Naive thymus-derived CD4-positive, alpha-beta T cell (primary cell): ENCODE measurements at regions of chr7 and their contacts with region 1.

Region 1: DNA sequence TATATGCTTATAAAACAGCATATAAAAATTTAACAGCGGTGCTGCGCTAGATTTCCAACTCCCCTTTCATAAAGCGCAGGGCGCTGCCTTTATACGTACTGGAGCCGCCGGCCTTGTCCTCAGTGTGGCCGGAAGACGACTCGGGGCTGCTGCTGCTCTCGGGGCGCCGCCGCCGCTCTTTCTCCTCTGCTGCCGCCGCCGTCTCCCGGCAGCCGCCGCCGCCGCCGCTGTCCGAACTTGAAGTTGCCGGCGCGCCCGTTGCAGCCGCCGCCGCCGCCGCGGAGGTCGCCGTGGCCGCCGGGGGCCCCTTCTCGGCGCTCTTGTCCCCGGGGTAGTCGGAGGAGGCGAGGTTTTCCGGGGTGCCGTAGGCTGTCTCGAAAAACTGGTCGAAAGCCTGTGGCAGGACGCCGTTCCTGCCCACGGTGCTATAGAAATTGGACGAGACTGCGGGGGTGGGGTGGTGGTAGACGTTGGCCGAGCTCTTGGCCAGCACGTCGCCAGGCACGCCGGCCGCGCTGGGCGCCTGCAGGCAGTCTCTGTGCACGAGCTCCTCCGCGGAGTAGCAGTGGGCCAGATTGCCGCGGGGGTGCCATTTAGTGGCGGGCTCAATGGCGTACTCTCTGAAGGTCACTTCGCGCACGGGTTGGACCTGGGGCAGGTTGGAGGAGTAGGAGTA is 557 bp downstream of the HOXA11 start:
- DNase-seq: peak in 2 of 9 donors; percentile 36 to 38
- ATAC-seq: peak; percentile 22
- H3K4me3 ChIP-seq: peak overlapping the region; percentile 39
- H3K4me3 Mint-ChIP-seq: peak overlapping the region; percentile 69 to 87 (median 79)
- H3K27ac ChIP-seq: no peak overlapping the region
- H3K27ac Mint-ChIP-seq: peak overlapping the region in 7 of 9 donors; percentile 43 to 84 (median 73)
- H3K4me1 ChIP-seq: peaks cover 40 to 52% of the 10 kb centered on the region in 2 donors
- H3K4me1 Mint-ChIP-seq: peaks cover 29 to 62% (median 51%) of the 10 kb centered on the region in 7 donors
- H3K27me3 ChIP-seq: peaks cover 47 to 89% of the 10 kb centered on the region in 2 donors
- H3K27me3 Mint-ChIP-seq: peaks cover 78 to 92% (median 81%) of the 10 kb centered on the region in 5 donors

Region 2: GRCh38 chr7:27139334-27140125 is 44.9 kb before region 1 on chr7:
- CTCF ChIA-PET with region 1: no interaction called
- POLR2A ChIA-PET with region 1: no interaction called
- intact Hi-C with region 1: no loop called
- DNase-seq: no peak
- ATAC-seq: no peak
- H3K4me3 ChIP-seq: no peak overlapping the region
- H3K4me3 Mint-ChIP-seq: no peak overlapping the region
- H3K27ac ChIP-seq: no peak overlapping the region
- H3K27ac Mint-ChIP-seq: no peak overlapping the region
- H3K4me1 ChIP-seq: no peaks in the 10 kb centered on the region
- H3K4me1 Mint-ChIP-seq: peaks cover 0 to 11% (median 5%) of the 10 kb centered on the region in 7 donors
- H3K27me3 ChIP-seq: peaks cover 0 to 4% of the 10 kb centered on the region in 2 donors
- H3K27me3 Mint-ChIP-seq: peaks cover 40 to 64% (median 59%) of the 10 kb centered on the region in 5 donors

Region 3: DNA sequence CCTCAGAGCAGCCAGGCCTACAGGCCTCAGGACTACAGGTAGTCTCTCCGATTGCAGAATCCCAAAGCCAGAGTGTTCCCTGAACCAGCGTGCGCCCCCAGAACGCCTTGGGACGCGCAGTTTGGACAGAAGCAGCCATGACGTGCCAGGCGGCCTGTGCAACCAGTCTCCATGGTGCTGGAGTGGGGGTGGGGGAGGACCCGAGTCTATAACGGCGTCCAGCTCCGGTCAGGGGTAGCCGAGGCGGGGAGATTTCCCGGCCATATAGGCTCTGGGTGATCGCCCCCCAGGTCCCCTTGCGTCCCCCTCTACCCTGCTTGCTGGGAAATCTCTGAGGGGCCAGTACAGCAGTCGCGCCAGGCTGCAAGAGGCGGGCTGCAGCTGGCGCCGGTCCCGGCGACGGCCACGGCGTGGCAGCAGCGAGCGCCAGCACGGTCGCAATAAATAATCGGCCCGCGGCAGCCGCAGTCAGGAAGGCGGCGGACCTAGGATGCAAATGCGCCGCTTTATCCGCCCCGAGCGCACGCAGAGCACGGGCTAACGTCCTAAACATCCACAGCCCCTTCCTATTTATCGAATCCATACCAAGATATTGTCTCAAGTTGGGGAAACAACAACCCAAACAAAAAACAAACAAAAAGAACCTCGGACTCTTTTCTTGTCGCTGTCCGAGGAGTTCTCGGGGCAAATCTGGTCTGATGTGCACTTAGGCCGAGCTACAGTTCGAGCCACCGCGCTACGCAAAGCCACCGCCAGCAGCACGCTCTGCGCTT is 33.7 kb before region 1 on chr7:
- CTCF ChIA-PET with region 1: interaction called, 3 read pairs
- POLR2A ChIA-PET with region 1: no interaction called
- intact Hi-C with region 1: loop called (anchors 5 kb)
- DNase-seq: peak in 8 of 9 donors; percentile 34 to 74 (median 62)
- ATAC-seq: peak; percentile 89
- H3K4me3 ChIP-seq: peak overlapping the region; percentile 75
- H3K4me3 Mint-ChIP-seq: peak overlapping the region; percentile 47 to 80 (median 77)
- H3K27ac ChIP-seq: no peak overlapping the region
- H3K27ac Mint-ChIP-seq: peak overlapping the region in 2 of 9 donors; percentile 32 to 79
- H3K4me1 ChIP-seq: peaks cover 34 to 44% of the 10 kb centered on the region in 2 donors
- H3K4me1 Mint-ChIP-seq: peaks cover 18 to 65% (median 47%) of the 10 kb centered on the region in 7 donors
- H3K27me3 ChIP-seq: peaks cover 52 to 73% of the 10 kb centered on the region in 2 donors
- H3K27me3 Mint-ChIP-seq: peaks cover 81 to 93% (median 90%) of the 10 kb centered on the region in 5 donors

Region 4: DNA sequence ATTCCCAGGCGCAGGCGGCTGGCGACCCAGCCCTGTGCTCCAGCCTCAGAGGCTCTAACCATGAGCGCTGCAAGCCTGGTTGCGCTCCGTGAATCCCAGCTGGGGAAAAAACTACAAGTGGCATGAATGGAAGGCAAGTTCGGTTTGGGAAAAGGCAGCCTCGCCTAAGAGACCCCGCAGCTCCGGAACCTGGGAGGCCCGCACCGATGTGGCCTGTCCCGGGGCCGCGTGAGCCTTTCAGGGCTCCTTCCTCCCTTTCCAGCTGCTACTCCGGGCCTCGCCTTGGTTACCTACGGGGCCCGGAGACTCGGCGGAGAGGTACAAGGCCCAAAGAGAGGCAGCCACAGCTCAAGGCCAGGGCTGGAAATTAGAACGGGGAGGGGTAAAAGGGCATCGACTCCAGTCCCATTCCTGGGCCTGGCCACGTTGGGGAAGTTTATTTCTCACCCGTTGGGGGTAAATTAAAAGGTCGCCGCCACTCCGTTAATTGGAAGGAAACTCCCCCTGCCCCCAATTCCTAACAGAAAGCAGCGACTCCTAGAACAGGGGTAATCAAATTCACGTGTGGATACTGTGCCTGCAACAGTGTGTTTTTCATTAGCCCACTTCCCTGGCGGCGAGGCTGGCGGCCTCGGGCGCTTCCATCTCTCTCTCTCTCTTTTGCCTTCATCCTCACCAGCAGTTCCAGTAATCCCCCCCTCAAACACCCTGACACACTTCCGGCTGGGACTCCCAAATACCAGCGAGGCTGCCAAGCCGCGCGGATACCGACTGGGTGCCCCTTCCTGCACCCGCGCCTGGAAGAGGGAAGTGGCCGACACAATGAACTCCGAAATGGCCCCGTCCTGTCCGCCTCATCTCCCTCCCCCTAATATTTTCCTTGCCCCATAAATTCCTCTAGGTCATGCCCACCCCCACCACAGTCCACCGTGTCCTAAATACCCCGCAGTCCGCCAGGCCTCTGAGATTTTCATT is 17.7 kb before region 1 on chr7:
- CTCF ChIA-PET with region 1: interaction called, 5 read pairs
- POLR2A ChIA-PET with region 1: interaction called, 7 read pairs
- intact Hi-C with region 1: loop called (anchors 2 kb)
- DNase-seq: peak in 2 of 9 donors; percentile 14 to 39
- ATAC-seq: no peak
- H3K4me3 ChIP-seq: no peak overlapping the region
- H3K4me3 Mint-ChIP-seq: peak overlapping the region in 8 of 10 donors; percentile 9 to 75 (median 56)
- H3K27ac ChIP-seq: no peak overlapping the region
- H3K27ac Mint-ChIP-seq: peak overlapping the region in 8 of 9 donors; percentile 36 to 88 (median 74)
- H3K4me1 ChIP-seq: peaks cover 15 to 40% of the 10 kb centered on the region in 2 donors
- H3K4me1 Mint-ChIP-seq: peaks cover 18 to 65% (median 30%) of the 10 kb centered on the region in 7 donors
- H3K27me3 ChIP-seq: peaks cover 43 to 82% of the 10 kb centered on the region in 2 donors
- H3K27me3 Mint-ChIP-seq: peaks cover 75 to 87% (median 79%) of the 10 kb centered on the region in 5 donors

Region 5: GRCh38 chr7:27172823-27173510 is 11.5 kb before region 1 on chr7:
- CTCF ChIA-PET with region 1: interaction called, 8 read pairs
- POLR2A ChIA-PET with region 1: interaction called, 7 read pairs
- intact Hi-C with region 1: loop called (anchors 1 to 2 kb)
- DNase-seq: peak in 2 of 9 donors; percentile 23 to 40
- ATAC-seq: peak; percentile 15
- H3K4me3 ChIP-seq: peak overlapping the region; percentile 36
- H3K4me3 Mint-ChIP-seq: peak overlapping the region in 9 of 10 donors; percentile 23 to 79 (median 69)
- H3K27ac ChIP-seq: no peak overlapping the region
- H3K27ac Mint-ChIP-seq: peak overlapping the region in 1 of 9 donors; percentile 86
- H3K4me1 ChIP-seq: peaks cover 16 to 25% of the 10 kb centered on the region in 2 donors
- H3K4me1 Mint-ChIP-seq: peaks cover 14 to 43% (median 23%) of the 10 kb centered on the region in 7 donors
- H3K27me3 ChIP-seq: peaks cover 32 to 65% of the 10 kb centered on the region in 2 donors
- H3K27me3 Mint-ChIP-seq: peaks cover 59 to 69% (median 67%) of the 10 kb centered on the region in 5 donors